Activated CD4-positive, alpha-beta memory T cell treated with anti-CD3 and anti-CD28 coated beads for 36 hours (primary cell): ENCODE measurements at regions of chr22 and their contacts with region 1.

Region 1: DNA sequence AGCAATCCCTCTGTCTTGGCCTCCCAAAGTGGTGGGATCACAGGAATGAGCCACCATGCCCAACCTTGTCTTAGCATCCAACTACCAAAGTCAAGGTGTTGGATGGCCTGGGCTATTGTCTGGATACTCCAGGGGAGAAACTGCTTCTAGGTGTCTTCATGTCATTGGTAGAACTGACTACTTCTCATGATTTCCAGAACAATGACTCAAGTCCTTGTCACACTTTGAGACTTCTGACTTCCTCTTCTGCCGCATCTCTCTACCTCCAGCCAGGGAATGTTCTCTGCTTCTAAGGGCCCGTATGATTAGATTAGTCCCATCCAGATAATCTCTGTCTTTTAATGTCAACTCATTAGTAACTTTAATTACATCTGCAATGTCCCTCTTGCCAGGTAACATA is 30.6 kb downstream of the APOL6 start:
- DNase-seq: no peak
- H3K4me3 Mint-ChIP-seq: no peak overlapping the region
- H3K27ac Mint-ChIP-seq: peak overlapping the region; percentile 69
- H3K4me1 Mint-ChIP-seq: peaks cover 20% of the 10 kb centered on the region
- H3K27me3 Mint-ChIP-seq: no peaks in the 10 kb centered on the region

Region 2: DNA sequence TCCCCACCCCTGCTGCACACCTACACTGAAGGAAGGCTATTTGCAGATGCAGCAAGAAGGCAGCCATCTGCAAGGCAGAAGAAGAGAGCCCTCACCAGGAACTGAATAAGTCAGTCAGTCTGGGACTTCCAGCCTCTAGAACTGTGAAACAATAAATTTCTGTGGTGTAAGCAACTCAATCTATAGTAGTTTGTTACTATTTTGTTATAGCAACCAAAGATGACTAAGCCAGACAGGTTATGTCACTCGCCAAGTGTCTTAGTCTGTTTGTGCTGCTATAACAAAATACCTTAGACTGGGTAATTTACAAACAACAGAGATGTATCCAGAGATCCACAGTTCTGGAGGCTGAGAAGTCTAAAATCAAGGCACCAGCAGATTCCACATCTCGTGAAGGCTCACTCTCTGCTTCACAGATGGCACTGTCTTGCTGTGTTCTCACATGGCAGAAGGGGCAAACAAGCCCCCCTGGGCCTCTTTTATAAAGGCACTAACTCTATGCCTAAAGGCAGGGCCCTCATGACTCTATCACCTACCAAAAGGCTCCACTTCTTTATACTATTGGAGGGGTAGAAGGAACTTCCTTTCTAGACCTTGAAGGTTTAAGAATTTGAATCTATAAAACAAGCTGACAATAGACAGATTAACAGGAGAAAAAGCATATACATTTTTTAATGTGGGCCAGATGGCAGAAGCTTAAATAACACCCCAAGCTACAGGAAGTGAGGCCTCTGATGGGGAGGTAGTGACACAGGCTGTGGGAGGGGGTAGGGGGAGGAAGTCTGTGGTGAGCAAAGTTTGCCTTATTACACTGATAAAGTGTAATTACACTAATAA is 18.3 kb before region 1 on chr22:
- CTCF ChIA-PET with region 1: interaction called, 3 read pairs
- POLR2A ChIA-PET with region 1: interaction called, 4 read pairs
- intact Hi-C with region 1: loop called (anchors 1 kb)
- DNase-seq: peak; percentile 72
- H3K4me3 Mint-ChIP-seq: peak overlapping the region; percentile 43
- H3K27ac Mint-ChIP-seq: peak overlapping the region; percentile 86
- H3K4me1 Mint-ChIP-seq: peaks cover 77% of the 10 kb centered on the region
- H3K27me3 Mint-ChIP-seq: no peaks in the 10 kb centered on the region